ENCODE measurements at regions of chr4 and their contacts with region 1.

Region 1: GRCh38 chr4:183074296-183074990 is 24.6 kb upstream of the WWC2 start:
- DNase-seq: no peak

Region 2: GRCh38 chr4:182938205-182938645 is 136.2 kb before region 1 on chr4:
- intact Hi-C with region 1: loop called (anchors 10 kb)
- DNase-seq: peak; percentile 34 to 94 (median 72)

Region 3: GRCh38 chr4:182955411-182955810 is 119.0 kb before region 1 on chr4:
- intact Hi-C with region 1: no loop called
- DNase-seq: no peak

Region 4: DNA sequence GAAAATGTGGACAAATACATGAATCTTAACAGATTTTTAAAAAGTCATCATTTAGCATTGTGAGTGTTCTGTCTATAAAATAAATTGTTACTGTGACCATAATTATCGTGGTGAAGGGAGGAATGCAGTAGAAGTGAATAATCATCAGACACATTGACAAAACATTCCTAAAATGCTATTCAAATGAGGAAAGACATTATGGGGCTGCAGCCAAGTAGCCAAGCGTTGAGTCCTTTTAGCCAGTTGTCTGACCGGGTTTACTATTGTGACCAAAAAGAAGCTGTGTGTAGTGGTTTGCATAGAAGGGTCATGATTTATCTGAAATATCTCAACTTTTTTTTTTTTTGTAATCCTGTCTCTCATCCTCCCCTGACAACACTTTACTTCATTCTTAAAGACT is 44.1 kb after region 1 on chr4:
- intact Hi-C with region 1: no loop called
- DNase-seq: no peak

Region 5: DNA sequence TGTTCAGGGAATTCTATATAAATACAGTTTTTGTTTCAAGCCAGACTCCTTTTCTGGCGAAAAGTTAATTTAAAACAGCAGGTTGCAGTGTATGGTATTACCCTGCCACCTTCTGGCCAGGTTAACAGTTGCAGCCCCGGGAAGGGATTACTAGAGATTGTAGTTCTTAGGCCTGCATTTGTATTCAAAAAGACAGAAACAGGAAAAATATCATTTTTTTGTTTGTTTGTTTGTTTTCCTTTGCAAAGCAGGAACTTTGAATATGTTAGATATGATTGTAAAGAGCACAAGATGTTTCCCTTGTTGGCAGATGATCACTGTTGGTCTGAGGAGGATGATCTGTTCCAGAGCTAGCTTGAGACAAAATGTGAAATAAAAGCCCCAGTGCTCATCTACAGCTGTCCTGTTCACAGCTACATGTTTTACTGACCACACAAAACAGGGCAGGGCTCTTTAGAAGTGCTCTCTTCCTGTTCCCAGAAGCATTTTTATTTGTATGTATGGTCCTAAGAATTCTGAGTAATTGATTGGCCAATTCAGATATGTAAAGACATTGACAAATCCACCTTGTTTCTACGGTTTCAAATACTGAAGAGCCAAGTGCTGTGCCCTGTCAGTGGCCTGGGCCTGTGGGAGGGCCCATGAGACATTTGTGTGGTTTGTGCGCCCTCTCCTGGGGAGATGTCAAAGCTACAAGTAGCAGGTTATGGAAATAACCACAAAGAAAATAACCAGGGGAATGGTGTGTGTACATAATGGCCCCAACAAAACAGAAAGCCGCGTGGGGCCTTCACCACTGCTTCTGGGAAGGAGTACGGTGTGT is 187.7 kb after region 1 on chr4:
- intact Hi-C with region 1: loop called (anchors 1 kb)
- DNase-seq: peak; percentile 47 to 96 (median 86)

Region 6: DNA sequence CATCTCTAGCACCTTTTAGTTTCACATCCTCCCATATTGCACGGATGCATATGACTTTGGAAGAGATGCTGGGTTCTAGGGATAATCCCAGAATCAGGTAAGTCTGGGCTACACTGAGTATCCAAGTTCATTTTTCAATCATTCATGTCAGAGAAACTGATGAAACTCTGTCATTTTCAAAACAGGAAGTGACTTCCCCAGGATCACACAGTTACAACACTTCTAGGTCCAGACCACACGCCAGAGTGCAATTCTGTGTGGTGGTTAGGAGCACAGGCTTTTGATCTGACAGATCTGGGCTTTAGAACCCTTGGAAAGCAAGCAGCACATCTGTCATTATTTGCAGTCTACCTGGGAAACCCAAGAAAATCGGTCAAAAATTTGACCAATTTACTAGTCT is 317.9 kb after region 1 on chr4:
- intact Hi-C with region 1: no loop called
- DNase-seq: peak in 1 of 10 donors; percentile 13

Region 7: DNA sequence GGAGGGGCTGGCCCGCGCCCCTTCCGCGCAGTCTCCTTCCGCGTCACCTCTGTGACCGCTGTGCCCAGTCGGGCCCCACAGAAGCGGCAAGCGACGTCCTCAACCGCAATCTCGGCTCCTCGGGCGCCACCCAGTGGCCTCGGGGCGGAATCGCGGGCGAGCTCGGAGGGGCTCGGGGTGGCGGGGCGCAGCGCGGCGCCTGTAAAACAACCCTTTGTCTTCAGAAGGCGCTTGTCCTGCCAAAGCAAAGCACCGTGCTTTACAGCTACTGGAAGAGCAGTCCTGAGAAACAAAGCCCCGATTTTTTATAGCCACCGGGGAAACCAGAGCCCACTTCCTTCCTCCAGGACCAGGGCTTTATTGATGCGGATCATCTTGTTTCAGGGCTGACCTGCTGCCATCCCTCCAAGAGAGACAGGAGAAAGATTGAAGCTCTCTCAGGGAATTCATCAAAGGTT is 332.7 kb after region 1 on chr4:
- intact Hi-C with region 1: loop called (anchors 10 kb)
- DNase-seq: peak; percentile 77 to 99 (median 92)